Activated CD8-positive, alpha-beta T cell treated with anti-CD3 and anti-CD28 coated beads for 36 hours (primary cell): ENCODE measurements at regions of chr14 and their contacts with region 1.

Region 1: DNA sequence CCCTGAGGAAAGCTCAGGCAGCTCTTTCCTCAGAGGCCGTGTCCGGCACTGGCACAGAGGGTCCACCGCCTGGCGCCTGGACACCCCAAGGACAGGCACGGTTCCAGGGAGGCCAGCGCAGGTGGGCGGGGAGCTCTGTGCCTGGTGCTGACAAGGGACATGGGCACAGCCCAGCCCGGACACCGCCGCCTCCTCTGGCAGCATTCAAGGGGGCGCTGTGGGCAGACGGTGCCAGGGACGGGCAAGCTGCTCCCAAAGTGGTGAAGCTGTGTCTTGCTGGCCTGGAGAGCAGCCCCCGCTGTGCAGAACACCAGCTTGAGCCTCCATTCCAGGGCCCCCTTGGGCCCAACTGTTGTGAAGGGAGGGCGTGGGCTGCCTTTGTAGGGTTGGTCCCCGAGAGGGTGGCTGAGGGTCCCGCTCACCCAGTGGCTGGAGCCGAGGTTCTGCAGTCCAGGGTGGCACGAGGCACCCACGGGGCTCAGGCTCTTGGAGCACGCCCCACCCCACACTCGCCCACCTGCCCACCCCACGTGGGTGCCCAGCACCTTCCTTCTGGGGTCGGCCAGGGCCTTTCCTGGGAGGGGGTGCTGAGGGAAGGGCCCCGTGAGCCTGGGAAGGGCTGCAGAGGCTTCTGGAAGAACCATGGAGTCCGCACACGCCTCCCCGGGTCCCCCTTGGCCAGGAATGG is 29.2 kb upstream of the TEX22 start:
- DNase-seq: no peak
- ATAC-seq: no peak
- H3K4me3 Mint-ChIP-seq: no peak overlapping the region
- H3K27ac Mint-ChIP-seq: no peak overlapping the region
- H3K4me1 Mint-ChIP-seq: peaks cover 9% of the 10 kb centered on the region
- H3K27me3 Mint-ChIP-seq: no peaks in the 10 kb centered on the region
- CTCF ChIP-seq: no peak

Region 2: DNA sequence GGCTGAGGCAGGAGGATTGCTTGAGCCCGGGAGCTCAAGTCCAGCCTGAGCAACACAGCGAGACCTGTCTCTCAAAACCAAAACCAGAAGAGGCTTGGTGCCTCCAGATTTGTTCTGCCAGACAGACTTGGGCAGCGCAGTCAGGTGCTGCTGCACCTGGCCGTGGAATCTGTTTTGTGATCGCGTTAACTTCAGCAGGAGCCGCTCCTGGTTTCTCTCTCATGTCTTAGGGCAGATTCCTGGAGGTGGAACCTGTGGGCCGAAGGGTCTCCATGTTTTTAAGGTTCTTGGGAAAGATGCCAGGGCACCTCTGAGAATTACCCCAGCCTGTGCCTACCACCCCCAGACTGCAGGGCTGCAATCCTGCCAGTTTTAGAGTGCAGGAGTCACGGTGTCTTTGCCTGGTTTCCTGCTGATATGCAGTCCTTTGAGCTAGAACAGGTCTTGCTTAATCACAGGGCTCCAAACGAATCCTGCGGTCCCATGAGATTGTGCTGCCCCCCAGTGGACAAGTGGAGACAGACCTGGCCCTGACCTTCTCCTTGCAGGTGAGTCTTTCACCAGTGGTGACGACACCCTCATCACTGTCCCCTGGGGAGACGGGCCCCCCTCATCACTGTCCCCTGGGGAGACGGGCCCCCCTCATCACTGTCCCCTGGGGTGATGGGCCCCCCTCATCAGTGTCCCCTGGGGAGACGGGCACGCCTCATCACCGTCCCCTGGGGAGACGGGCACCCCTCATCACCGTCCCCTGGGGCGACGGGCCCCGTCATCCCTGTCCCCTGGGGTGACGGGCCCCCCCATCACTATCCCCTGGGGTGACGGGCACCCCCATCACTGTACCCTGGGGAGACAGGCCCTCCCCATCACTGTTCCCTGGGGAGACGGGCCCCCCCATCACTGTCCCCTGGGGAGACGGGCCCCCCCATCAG is 16.9 kb before region 1 on chr14:
- CTCF ChIA-PET with region 1: no interaction called
- POLR2A ChIA-PET with region 1: no interaction called
- intact Hi-C with region 1: no loop called
- DNase-seq: peak; percentile 94
- ATAC-seq: peak; percentile 100
- H3K4me3 Mint-ChIP-seq: no peak overlapping the region
- H3K27ac Mint-ChIP-seq: no peak overlapping the region
- H3K4me1 Mint-ChIP-seq: peaks cover 2% of the 10 kb centered on the region
- H3K27me3 Mint-ChIP-seq: no peaks in the 10 kb centered on the region
- CTCF ChIP-seq: peak; percentile 75

Region 3: DNA sequence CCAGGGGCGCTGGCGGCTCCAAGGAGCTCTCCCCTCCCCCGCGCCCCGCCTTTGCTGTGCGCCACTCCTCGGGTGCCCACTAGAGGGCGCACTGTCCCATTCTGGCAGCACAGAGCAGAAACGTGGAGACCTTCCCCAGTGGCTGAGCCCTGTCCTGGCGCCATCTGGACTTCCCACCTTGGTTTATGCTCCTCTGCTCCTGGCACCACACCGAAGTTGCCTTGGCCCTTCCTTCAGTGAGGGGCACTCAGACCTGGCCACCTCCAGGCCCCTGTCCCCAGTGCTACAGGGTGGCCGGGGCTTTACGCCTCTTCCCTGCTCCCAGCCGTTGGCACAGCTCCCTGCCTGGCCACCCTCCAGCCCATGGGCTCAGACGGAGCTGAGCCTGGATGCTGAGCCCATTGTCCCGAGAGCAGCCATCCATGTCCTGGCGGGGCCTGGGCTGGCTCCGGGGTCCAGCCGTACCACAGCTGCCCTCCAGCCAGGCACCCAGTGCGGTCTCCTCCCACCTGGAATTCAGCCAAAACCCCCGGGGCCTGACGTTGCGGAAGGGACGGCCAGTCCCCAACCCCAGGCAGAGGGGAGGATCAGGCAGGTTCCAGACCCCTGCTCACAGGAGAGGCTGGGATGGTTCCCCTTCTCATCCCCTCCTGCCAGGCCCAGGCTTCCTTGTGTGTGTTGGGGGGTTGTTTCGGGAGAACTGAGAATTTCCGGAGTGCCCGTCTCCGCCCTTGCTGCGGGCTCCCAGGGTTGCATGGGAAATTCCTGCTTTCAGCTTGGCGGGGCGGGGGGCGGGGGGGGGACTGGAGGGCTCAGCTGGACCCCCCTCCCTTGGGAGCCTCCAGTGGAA is 112.1 kb after region 1 on chr14:
- CTCF ChIA-PET with region 1: interaction called, 24 read pairs
- POLR2A ChIA-PET with region 1: no interaction called
- intact Hi-C with region 1: loop called (anchors 5 kb)
- DNase-seq: peak; percentile 92
- ATAC-seq: peak; percentile 68
- H3K4me3 Mint-ChIP-seq: peak overlapping the region; percentile 65
- H3K27ac Mint-ChIP-seq: peak overlapping the region; percentile 96
- H3K4me1 Mint-ChIP-seq: peaks cover 52% of the 10 kb centered on the region
- H3K27me3 Mint-ChIP-seq: peaks cover 21% of the 10 kb centered on the region
- CTCF ChIP-seq: peak; percentile 93

Region 4: GRCh38 chr14:105527661-105528581 is 158.8 kb after region 1 on chr14:
- CTCF ChIA-PET with region 1: interaction called, 11 read pairs
- POLR2A ChIA-PET with region 1: no interaction called
- intact Hi-C with region 1: no loop called
- DNase-seq: peak; percentile 86
- ATAC-seq: peak; percentile 60
- H3K4me3 Mint-ChIP-seq: peak overlapping the region; percentile 81
- H3K27ac Mint-ChIP-seq: peak overlapping the region; percentile 69
- H3K4me1 Mint-ChIP-seq: peaks cover 17% of the 10 kb centered on the region
- H3K27me3 Mint-ChIP-seq: peaks cover 3% of the 10 kb centered on the region
- CTCF ChIP-seq: peak; percentile 81